Right cardiac atrium (tissue), 5 donors: ENCODE measurements at regions of chr18 and their contacts with region 1.

Region 1: DNA sequence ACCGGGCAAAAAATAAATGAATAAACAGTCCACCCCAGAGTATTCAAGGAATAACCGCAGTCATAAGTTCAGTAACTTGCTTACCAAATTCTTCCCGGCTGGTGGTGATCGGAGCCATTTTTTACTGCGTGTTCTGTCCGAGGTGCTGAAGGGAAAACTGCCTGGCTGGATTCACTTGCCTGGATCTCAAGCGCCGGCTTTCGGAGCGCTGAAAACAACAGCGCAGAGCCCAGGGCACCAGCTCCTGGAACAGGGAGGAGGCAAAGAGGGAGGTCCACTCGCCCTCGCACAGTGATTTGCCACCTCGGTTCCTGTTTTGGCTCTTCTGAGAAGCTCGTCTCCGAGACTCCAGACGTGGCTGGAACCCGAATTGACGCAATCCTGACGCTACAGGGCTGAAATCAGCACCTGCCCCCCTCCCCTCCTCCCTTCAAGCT is at the start of gene SYT4:
- DNase-seq: peak; percentile 28 to 63 (median 60)
- ATAC-seq: peak in 1 of 2 donors; percentile 67
- H3K4me3 ChIP-seq: no peak within 1 kb of the TSS
- H3K27ac ChIP-seq: no peak within 1 kb of the TSS
- H3K4me1 ChIP-seq: no peaks in the 10 kb centered on the region
- H3K27me3 ChIP-seq: no peaks in the 10 kb centered on the region
- total RNA-seq, gene SYT4: 0.47 to 1.6 (median 1.0) TPM in 3 of 4 donors, not detected in the other

Region 2: GRCh38 chr18:42298759-42299675 is 978.2 kb before region 1 on chr18:
- intact Hi-C with region 1: loop called in 2 of 4 experiments (anchors 5 to 10 kb)
- DNase-seq: peak; percentile 72 to 86 (median 76)
- ATAC-seq: peak; percentile 86 to 88
- H3K4me3 ChIP-seq: peak overlapping the region; percentile 30
- H3K27ac ChIP-seq: no peak overlapping the region
- H3K4me1 ChIP-seq: no peaks in the 10 kb centered on the region
- H3K27me3 ChIP-seq: no peaks in the 10 kb centered on the region